Spleen (tissue), 13 donors: ENCODE measurements at regions of chr4 and their contacts with region 1.

Region 1: GRCh38 chr4:15805583-15806517 is 27.7 kb downstream of the CD38 start:
- DNase-seq: no peak
- H3K4me3 ChIP-seq: no peak overlapping the region
- H3K27ac ChIP-seq: peak overlapping the region in 1 of 8 donors; percentile 41
- H3K4me1 ChIP-seq: peaks cover 8 to 63% (median 40%) of the 10 kb centered on the region in 6 donors
- H3K27me3 ChIP-seq: no peaks in the 10 kb centered on the region
- CTCF ChIP-seq: peak; percentile 58 to 76 (median 69)
- POLR2A ChIP-seq: no peak

Region 2: DNA sequence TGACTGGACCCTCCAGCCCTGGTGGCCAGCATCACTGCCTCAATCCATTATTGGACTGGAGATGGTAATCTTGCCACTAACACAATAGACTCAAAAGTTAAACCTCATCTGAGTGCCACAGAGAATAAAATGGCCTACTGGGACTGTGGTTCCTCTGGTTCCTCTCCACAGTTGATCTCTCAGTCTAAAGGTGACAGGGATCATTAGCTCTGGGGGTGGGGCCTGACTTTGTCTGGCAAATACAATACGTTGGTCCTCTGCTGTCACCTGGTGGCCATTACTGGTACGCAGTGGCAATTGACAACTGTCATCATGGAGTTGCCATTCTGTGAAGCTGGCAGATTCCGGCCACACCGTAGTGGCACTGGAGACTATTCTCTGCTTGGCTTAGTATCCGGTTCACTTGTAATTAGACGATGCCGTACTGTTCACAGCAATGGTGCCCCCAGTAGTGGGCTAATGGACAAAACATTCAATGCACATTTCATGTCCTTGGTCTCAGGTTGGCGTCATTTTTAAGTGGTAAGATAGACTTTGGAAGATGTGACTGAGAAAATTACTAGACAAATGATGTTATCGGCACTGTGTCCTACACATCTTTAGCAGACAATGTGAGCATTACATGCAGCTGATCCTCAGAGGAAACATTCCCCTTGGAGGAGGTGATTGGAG is 150.5 kb after region 1 on chr4:
- intact Hi-C with region 1: loop called (anchors 5 kb)
- DNase-seq: peak; percentile 88
- H3K4me3 ChIP-seq: no peak overlapping the region
- H3K27ac ChIP-seq: no peak overlapping the region
- H3K4me1 ChIP-seq: peaks cover 0 to 11% (median 2%) of the 10 kb centered on the region in 6 donors
- H3K27me3 ChIP-seq: no peaks in the 10 kb centered on the region
- CTCF ChIP-seq: peak; percentile 65 to 96 (median 84)
- POLR2A ChIP-seq: no peak

Region 3: DNA sequence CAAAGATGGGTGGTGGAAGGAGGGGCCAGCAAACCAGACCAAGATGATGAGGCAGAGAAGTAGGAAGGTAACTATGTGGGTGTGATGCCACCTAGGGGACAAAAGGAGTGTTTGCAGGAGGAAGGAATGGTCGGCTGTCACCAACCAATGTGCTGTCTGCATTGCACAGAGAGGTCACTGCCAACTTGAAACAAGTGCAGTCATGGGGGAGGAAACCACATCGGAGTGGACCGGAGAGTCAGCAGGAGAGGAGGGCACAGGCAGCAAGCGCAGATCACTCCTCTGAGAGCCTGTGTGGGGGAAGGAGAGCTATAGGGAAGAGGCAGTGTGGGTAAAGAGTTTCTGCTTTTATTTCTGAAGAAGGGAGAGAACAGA is 195.6 kb after region 1 on chr4:
- intact Hi-C with region 1: loop called (anchors 5 kb)
- DNase-seq: no peak
- H3K4me3 ChIP-seq: no peak overlapping the region
- H3K27ac ChIP-seq: no peak overlapping the region
- H3K4me1 ChIP-seq: peaks cover 0 to 7% (median 1%) of the 10 kb centered on the region in 6 donors
- H3K27me3 ChIP-seq: peaks cover 0 to 9% (median 0%) of the 10 kb centered on the region in 7 donors
- CTCF ChIP-seq: peak; percentile 72 to 94 (median 89)
- POLR2A ChIP-seq: no peak